Astrocyte of the cerebellum (primary cell): ENCODE measurements at regions of chr19 and their contacts with region 1.

Region 1: GRCh38 chr19:55624109-55625003 is at the start of gene ZNF784:
- DNase-seq: peak; percentile 80
- H3K4me3 ChIP-seq: peak within 1 kb of the TSS; percentile 59
- CTCF ChIP-seq: no peak

Region 2: GRCh38 chr19:55516878-55517620 is 107.3 kb before region 1 on chr19:
- in situ Hi-C with region 1: loop called (anchors 5 kb)
- DNase-seq: peak; percentile 76
- H3K4me3 ChIP-seq: peak overlapping the region; percentile 36
- CTCF ChIP-seq: peak; percentile 91

Region 3: DNA sequence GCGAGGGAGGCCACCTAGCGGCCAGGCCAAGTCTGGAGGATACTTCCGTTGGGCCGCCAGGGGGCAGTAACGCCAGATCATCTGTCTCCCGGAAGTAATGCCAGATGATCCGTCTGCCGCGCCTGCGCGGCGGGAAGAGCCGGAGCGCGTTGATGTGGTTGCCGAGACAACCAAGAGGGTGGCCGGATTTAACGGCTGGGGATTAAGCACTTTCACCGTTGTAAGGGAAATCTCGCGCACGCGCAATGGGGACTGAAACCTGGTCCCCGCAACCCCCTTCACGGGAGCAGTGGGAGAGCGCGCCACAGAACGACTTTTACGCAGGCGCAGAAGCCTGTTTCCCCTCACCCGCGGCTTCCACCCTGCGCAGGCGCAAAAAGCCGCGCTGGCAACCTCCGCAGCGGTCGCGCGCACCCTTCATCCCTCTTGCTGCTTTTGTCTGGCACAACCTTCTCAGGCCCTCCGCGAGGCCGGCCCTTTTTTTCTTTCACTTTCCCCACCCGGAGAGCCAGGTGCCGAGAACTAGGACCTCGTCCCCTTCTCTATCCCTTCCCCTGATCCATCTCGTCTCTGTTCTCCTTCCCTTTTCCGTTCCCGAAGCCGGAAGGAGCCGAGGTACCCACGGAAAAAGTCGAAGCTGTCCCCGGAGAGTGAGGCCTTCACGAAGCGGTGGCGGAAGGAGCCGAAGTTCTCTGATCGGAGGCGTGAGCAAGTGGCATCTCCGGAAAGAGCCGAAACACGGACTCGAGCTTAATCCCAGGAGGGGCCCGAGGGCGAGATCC is 29.6 kb after region 1 on chr19:
- in situ Hi-C with region 1: no loop called
- DNase-seq: peak; percentile 99
- H3K4me3 ChIP-seq: peak overlapping the region; percentile 73
- CTCF ChIP-seq: peak; percentile 100

Region 4: DNA sequence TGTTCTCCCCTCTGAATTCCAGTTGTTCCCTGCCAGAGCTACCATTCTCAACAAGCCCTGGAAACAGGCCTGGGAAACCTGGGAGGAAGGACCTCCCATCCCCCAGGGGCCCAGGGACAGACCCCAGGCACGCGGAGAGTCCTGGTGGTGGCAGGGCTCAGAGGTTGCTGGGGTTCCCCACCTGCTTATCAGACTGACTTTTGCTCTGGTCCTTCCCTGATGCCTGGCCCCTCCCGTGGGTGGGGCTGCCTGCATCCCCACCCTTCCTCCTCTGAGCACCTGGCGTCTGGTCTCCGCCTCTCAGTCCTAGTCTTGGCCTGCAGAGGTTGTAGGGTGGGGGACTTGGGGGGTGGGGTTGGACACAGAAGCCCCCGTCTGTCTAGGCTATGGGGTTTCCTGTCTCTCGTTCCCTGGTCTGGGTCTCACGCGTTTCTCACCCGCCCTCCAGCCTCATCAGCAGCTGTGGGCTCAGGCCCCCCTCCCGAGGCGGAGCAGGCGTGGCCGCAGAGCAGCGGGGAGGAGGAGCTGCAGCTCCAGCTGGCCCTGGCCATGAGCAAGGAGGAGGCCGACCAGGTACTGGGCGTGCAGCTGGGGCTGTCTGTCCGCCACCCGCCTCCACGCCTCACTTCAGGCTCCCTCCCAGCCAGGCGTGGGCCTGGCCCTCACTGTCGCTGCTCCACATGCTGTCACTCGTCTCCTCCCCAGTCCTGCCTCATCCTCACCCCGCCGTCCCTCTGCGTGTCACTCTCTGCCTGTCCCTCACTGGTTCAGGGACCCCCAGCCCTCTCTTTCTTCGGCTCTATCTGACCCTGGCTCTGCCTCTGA is 64.3 kb after region 1 on chr19:
- in situ Hi-C with region 1: no loop called
- DNase-seq: no peak
- H3K4me3 ChIP-seq: no peak overlapping the region
- CTCF ChIP-seq: no peak

Region 5: DNA sequence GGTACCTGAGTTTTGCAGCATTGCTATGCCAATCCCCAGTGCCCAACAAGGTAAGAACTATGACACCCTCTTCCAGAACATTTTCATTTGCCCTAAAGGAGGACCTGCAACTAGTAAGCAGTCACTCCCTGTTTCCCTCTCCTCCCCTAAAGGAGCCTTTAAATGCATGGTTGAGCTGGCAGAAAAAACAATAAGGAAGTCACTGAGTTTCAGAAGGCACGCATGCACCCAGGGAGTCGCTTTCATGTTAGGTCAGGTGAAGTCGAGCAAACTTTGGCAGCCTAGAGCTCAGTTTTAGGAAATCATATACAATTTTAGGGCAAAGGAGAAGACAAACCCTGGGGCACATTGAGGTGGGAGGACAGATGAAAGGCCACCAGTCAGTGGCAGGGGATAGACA is 195.7 kb after region 1 on chr19:
- in situ Hi-C with region 1: no loop called
- DNase-seq: no peak
- H3K4me3 ChIP-seq: no peak overlapping the region
- CTCF ChIP-seq: no peak